CD4-positive, alpha-beta T cell (primary cell): ENCODE measurements at regions of chr14 and their contacts with region 1.

Region 1: GRCh38 chr14:95128140-95128539 is 29.2 kb downstream of the DICER1 start:
- DNase-seq: no peak
- ATAC-seq: no peak
- H3K4me3 ChIP-seq: no peak overlapping the region
- H3K4me3 Mint-ChIP-seq: no peak overlapping the region
- H3K27ac ChIP-seq: no peak overlapping the region
- H3K27ac Mint-ChIP-seq: peak overlapping the region; percentile 64
- H3K4me1 ChIP-seq: no peaks in the 10 kb centered on the region
- H3K4me1 Mint-ChIP-seq: peaks cover 21% of the 10 kb centered on the region
- H3K27me3 ChIP-seq: no peaks in the 10 kb centered on the region
- H3K27me3 Mint-ChIP-seq: no peaks in the 10 kb centered on the region
- CTCF ChIP-seq: no peak

Region 2: DNA sequence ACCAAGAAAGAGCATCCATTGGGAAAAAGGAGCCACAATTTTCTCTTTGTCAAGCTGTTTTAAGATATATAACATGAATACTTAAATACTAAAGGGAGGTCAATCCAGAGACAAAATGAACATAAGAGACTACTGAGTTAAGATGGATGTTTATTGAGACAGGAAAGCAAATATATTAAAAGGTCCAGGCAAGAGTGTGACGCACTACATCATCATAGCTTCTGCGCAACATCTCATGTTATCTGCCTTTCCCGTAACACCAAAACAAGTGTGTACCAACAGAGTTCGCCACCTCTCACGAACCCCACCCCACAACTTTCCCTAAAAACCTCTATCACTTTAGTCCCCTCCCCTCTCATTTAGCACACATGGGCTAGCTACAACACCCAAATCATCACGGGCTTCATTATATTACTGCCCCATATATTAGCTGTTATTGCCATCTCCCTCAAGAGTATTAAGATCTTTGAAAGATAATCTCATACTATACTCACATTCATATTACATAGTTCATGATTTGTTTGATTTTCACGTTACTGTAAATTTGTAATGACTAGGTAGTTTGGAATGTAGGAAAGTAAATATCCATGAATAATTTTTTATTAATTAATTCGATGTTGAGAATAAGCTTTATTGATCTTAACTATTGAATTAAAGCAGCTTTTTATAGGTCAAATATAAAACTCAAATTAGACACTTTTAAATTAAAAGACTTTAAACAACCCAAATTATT is 21.2 kb after region 1 on chr14:
- CTCF ChIA-PET with region 1: no interaction called
- POLR2A ChIA-PET with region 1: interaction called, 3 read pairs
- intact Hi-C with region 1: loop called in 1 of 2 experiments (anchors 2 kb)
- DNase-seq: no peak
- ATAC-seq: no peak
- H3K4me3 ChIP-seq: no peak overlapping the region
- H3K4me3 Mint-ChIP-seq: no peak overlapping the region
- H3K27ac ChIP-seq: no peak overlapping the region
- H3K27ac Mint-ChIP-seq: no peak overlapping the region
- H3K4me1 ChIP-seq: peaks cover 13% of the 10 kb centered on the region
- H3K4me1 Mint-ChIP-seq: peaks cover 90% of the 10 kb centered on the region
- H3K27me3 ChIP-seq: no peaks in the 10 kb centered on the region
- H3K27me3 Mint-ChIP-seq: no peaks in the 10 kb centered on the region
- CTCF ChIP-seq: no peak

Region 3: GRCh38 chr14:95998656-95999055 is 870.5 kb after region 1 on chr14:
- CTCF ChIA-PET with region 1: no interaction called
- POLR2A ChIA-PET with region 1: no interaction called
- intact Hi-C with region 1: no loop called
- DNase-seq: peak in 1 of 14 experiments; percentile 1
- ATAC-seq: no peak
- H3K4me3 ChIP-seq: no peak overlapping the region
- H3K4me3 Mint-ChIP-seq: no peak overlapping the region
- H3K27ac ChIP-seq: no peak overlapping the region
- H3K27ac Mint-ChIP-seq: no peak overlapping the region
- H3K4me1 ChIP-seq: no peaks in the 10 kb centered on the region
- H3K4me1 Mint-ChIP-seq: no peaks in the 10 kb centered on the region
- H3K27me3 ChIP-seq: peaks cover 25 to 43% of the 10 kb centered on the region in 2 experiments
- H3K27me3 Mint-ChIP-seq: peaks cover 81% of the 10 kb centered on the region
- CTCF ChIP-seq: peak; percentile 19